T-cell (primary cell): ENCODE measurements at regions of chr6 and their contacts with region 1.

Region 1: GRCh38 chr6:35522660-35523658 is 10.3 kb upstream of the TULP1 start:
- DNase-seq: peak; percentile 52 to 82 (median 69)
- ATAC-seq: peak; percentile 91 to 96 (median 93)
- H3K4me3 ChIP-seq: peak overlapping the region; percentile 11 to 25
- H3K4me3 Mint-ChIP-seq: peak overlapping the region; percentile 53 to 65 (median 58)
- H3K27ac ChIP-seq: peak overlapping the region; percentile 28
- H3K27ac Mint-ChIP-seq: peak overlapping the region; percentile 76 to 79
- H3K4me1 ChIP-seq: peaks cover 6 to 31% of the 10 kb centered on the region in 2 experiments
- H3K4me1 Mint-ChIP-seq: peaks cover 20 to 28% (median 21%) of the 10 kb centered on the region in 3 donors
- H3K27me3 ChIP-seq: peaks cover 0 to 9% of the 10 kb centered on the region in 2 experiments
- H3K27me3 Mint-ChIP-seq: no peaks in the 10 kb centered on the region

Region 2: GRCh38 chr6:34392497-34393190 is 1130.3 kb before region 1 on chr6 and contains the start of gene NUDT3:
- CTCF ChIA-PET with region 1: no interaction called
- POLR2A ChIA-PET with region 1: interaction called in 1 of 2 experiments, 10 read pairs
- DNase-seq: peak; percentile 85 to 97 (median 91)
- ATAC-seq: peak; percentile 83 to 87 (median 84)
- H3K4me3 ChIP-seq: peak within 1 kb of the TSS; percentile 66 to 81
- H3K4me3 Mint-ChIP-seq: peak within 1 kb of the TSS in 2 of 3 donors; percentile 72 to 98
- H3K27ac ChIP-seq: peak within 1 kb of the TSS; percentile 67
- H3K27ac Mint-ChIP-seq: peak within 1 kb of the TSS; percentile 96
- H3K4me1 ChIP-seq: peaks cover 13 to 23% of the 10 kb centered on the region in 2 experiments
- H3K4me1 Mint-ChIP-seq: peaks cover 22 to 28% (median 26%) of the 10 kb centered on the region in 3 donors
- H3K27me3 ChIP-seq: no peaks in the 10 kb centered on the region
- H3K27me3 Mint-ChIP-seq: no peaks in the 10 kb centered on the region
- total RNA-seq, gene NUDT3: 23.5 to 31.0 (median 28.9) TPM

Region 3: DNA sequence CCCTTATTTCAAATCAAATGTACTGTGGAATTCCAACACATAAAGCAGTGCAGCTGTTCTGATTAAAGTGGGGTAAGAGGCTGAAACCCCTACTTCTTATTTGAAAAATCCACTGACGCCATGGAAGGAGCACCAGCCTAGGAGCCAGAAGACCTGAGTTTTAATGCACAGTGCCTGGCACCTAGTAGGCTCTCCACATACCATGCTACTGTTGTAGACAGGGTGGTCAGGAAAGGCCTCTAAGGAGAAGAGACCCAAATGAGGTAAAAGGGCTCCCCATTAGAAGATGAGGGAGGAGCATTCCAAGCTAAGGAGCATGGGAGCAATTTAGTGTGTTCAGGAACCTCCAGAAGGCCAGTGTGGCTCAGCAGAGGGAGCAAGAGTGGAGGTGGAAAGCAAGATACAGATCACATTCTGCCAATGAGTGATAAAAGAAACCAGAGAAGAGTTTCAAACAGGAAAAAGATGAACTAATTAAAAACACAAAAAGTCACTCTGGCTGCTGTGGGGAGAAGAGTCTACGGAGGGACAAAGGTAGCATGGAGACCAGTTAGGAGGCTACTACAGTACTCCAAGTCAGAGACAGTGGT is 275.2 kb before region 1 on chr6:
- CTCF ChIA-PET with region 1: no interaction called
- POLR2A ChIA-PET with region 1: no interaction called
- DNase-seq: no peak
- ATAC-seq: no peak
- H3K4me3 ChIP-seq: no peak overlapping the region
- H3K4me3 Mint-ChIP-seq: no peak overlapping the region
- H3K27ac ChIP-seq: no peak overlapping the region
- H3K27ac Mint-ChIP-seq: peak overlapping the region; percentile 14 to 23
- H3K4me1 ChIP-seq: no peaks in the 10 kb centered on the region
- H3K4me1 Mint-ChIP-seq: peaks cover 3 to 23% (median 11%) of the 10 kb centered on the region in 3 donors
- H3K27me3 ChIP-seq: no peaks in the 10 kb centered on the region
- H3K27me3 Mint-ChIP-seq: no peaks in the 10 kb centered on the region

Region 4: DNA sequence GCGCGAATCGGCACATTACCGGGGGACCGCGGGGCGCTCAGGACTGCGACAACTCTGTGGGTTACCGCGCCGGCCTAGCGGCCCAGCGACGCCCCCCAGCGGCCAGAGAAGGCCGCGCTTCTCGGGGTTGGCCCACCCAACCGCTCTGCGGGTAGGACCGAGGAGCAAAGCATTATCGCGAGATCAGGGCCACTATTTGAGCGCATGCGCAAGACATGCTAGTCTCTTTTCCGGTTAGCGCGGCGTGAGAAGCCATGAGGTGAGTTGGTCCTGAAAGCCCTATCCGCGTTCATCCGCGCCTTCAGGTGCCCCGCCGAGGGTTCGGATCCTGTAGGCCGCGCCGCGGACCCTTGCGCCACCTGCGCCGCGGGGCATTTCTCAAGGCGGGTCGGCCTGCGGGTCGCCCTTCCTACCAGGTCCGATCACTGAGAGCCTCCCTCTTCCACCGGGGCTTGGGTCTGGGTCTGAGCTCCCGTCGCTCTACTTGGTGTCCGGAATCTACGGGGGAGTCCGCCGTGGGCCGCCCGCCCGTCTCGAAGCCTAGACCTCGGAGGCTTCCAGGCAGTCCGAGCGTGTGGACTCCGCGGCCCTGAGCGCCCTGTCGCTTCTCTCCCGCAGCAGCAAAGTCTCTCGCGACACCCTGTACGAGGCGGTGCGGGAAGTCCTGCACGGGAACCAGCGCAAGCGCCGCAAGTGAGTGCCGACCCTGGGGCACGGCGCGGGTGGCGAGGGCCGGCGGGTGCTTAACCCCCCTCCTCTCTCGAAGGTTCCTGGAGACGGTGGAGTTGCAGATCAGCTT is 54.6 kb before region 1 on chr6 and contains the start of gene RPL10A:
- CTCF ChIA-PET with region 1: interaction called in 1 of 2 experiments, 11 read pairs
- POLR2A ChIA-PET with region 1: no interaction called
- DNase-seq: peak; percentile 90 to 98 (median 95)
- ATAC-seq: peak; percentile 85 to 92 (median 91)
- H3K4me3 ChIP-seq: peak within 1 kb of the TSS; percentile 82 to 100
- H3K4me3 Mint-ChIP-seq: peak within 1 kb of the TSS; percentile 95 to 98 (median 96)
- H3K27ac ChIP-seq: peak within 1 kb of the TSS; percentile 96
- H3K27ac Mint-ChIP-seq: peak within 1 kb of the TSS; percentile 98 to 99
- H3K4me1 ChIP-seq: peaks cover 5 to 46% of the 10 kb centered on the region in 2 experiments
- H3K4me1 Mint-ChIP-seq: peaks cover 35 to 42% (median 40%) of the 10 kb centered on the region in 3 donors
- H3K27me3 ChIP-seq: no peaks in the 10 kb centered on the region
- H3K27me3 Mint-ChIP-seq: no peaks in the 10 kb centered on the region
- total RNA-seq, gene RPL10A: 1,890 to 2,203 (median 2,081) TPM

Region 5: DNA sequence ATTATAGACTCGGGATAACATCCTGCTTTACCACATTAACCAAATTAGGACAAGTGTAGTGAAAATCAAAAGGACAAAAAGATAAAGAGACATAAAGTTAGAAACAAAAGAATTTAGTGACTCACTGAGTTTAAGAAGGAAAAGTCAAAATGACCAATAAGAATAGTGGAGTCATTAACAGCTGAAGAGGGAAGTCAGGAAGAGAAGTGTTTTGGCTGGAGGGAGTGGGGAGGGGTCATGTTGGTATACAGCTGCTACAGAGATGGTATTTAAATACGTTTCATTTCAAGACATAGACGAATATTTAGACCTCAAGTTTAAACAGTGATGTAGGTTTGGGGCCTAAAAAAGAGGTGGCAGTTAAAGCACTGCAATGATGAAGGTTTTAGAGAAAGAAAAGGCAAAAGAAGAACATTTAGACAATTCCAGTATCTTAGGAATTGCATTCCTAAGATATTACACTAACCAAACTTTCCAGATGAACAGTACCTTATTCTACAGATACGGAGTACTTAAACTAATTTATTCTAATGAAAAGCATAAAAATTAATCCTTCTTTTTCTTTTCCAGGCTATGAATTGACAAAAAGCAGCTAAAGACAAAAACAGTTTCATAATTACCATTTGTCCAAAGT is 155.2 kb after region 1 on chr6:
- CTCF ChIA-PET with region 1: no interaction called
- POLR2A ChIA-PET with region 1: no interaction called
- DNase-seq: no peak
- ATAC-seq: no peak
- H3K4me3 ChIP-seq: no peak overlapping the region
- H3K4me3 Mint-ChIP-seq: peak overlapping the region; percentile 19 to 50 (median 21)
- H3K27ac ChIP-seq: peak overlapping the region; percentile 8
- H3K27ac Mint-ChIP-seq: peak overlapping the region; percentile 86
- H3K4me1 ChIP-seq: peaks cover 29 to 31% of the 10 kb centered on the region in 2 experiments
- H3K4me1 Mint-ChIP-seq: peaks cover 88 to 99% (median 92%) of the 10 kb centered on the region in 3 donors
- H3K27me3 ChIP-seq: no peaks in the 10 kb centered on the region
- H3K27me3 Mint-ChIP-seq: no peaks in the 10 kb centered on the region